ENCODE measurements at regions of chr1 and their contacts with region 1.

Region 1: DNA sequence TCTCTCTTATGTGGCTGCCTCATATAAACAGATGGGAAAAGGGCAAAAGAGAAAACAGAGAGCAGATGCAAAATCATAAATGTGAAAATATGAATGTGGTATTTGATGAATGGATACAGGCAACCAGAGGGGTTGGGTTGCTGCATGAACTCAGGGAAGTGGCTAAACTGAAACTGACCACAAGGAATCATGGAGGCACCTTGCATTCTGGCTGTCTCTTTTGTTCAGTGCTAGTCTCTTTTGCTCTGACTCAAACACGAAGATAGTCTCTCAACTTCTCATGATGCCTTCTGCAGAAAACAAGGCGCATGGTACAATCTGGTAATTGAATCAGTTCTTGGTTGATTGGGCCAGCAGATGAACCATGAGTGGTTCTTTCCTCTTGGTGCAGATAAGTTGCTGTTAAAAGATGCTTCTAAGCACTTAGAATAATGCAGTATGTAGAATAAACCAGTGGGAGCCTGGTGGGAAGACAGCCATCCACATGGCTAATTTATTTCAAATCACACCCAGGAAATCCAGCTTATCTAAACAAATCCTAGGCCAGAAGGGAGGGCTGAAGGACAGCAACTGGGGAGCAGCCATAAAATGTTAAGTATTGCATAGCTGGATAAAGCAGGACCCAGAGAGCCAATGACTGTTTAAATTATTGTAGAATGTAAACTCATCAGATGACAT is 64.2 kb downstream of the HLX start:
- DNase-seq: no peak
- H3K4me3 ChIP-seq: no peak overlapping the region
- H3K27ac ChIP-seq: no peak overlapping the region
- H3K4me1 ChIP-seq: no peaks in the 10 kb centered on the region
- CTCF ChIP-seq: no peak

Region 2: DNA sequence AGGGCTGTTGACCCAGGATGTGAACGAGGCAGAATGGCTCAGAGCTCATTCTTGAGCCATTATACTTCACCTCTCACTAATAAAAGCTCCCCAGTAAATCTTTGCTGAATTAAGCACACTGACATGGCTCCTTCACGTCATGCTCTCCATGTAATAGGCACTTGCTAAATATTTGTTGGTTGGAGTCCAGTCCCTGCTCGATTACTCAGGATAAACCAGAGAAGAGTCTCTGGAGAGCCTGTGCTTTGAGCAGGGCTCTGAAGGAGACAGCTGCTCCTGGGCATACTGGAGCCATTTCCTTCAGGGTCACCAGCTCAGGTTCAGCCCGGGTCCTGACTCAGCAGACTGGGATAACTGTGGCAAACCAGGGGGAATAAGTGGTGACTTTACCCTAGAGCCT is 17.3 kb before region 1 on chr1:
- CTCF ChIA-PET with region 1: no interaction called
- POLR2A ChIA-PET with region 1: interaction called, 11 read pairs
- intact Hi-C with region 1: no loop called
- DNase-seq: no peak
- H3K4me3 ChIP-seq: no peak overlapping the region
- H3K27ac ChIP-seq: no peak overlapping the region
- H3K4me1 ChIP-seq: no peaks in the 10 kb centered on the region
- CTCF ChIP-seq: no peak

Region 3: DNA sequence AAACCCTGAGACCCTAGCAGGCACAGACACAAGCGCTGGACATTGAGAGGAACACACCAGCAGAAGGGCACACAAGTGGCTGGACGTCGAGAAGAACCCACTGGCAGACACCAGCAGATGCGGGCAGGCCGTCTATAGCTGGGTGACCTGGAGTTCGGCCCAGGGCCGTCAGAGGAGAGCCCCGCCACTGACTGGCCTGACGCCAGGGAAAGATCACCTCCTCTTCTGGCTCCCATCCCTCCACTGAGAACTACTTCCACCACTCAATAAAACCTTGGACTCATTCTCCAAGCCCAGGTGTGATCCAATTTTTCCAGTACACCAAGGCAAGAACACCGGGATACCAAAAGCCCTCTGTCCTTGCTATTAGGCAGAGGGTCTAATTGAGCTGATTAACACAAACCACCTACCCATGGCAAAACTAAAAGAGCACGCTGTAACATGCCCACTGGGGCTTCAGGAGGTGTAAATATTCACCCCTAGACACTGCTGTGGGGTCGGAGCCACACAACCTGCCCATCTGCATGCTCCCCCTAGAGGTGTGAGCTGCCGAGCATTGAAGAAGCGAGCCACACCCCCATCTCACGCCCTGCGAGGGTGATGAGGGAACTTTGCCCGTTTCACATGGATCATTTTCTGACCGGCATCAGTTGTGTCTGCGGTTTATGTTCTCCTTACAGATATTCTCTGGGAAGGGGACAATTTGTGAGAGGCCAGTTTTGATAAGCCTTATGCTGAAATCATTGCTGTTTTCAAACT is 40.6 kb after region 1 on chr1:
- CTCF ChIA-PET with region 1: no interaction called
- POLR2A ChIA-PET with region 1: no interaction called
- intact Hi-C with region 1: no loop called
- DNase-seq: no peak
- H3K4me3 ChIP-seq: no peak overlapping the region
- H3K27ac ChIP-seq: no peak overlapping the region
- H3K4me1 ChIP-seq: no peaks in the 10 kb centered on the region
- CTCF ChIP-seq: peak; percentile 32; the same call in 1 of the 2 replicates

Region 4: DNA sequence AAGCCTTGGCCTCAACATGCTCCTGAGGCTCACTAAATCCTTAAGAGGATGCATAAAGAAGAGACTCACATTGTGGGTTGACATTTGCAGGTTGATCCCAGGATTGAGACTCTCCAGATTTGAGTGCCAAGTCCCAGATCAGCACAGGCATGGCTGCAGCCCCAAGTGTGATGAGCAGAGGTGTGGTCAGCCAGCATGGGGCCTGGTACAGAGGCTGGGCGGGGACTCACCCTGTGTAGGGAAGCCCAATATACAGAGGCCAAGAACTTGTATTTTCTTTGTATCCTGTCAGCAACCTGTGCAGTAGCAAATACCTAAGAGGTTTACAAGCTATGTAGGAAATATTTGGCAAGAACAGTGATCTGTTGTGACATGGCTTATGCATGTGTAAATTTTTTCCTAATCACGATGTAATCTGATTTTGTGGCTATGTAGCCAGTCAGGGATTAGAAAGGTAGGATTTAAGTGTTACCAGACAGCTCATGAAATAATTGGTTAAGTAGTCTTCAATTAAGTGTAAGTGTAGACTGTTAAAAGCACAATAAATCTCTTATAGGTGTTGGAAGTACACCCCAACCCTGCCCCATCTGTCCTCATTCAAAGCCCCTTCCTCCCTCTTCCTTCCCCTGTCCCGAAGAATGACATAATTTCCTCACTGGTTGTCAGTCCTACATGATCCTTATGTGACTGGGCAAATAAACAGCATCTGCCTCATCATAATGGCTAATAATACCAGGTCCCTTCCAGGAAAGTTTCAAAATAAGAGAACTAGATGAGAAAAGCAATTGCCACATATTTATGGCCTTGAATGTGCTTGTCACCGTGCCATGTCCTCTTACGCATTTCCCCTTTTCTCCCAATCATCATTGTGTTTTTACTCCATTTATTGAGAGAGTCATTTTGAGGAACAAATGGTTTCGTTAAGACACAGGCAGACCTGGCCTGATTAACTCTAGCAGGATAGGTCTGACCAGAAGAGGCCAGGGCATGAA is 56.7 kb after region 1 on chr1:
- CTCF ChIA-PET with region 1: no interaction called
- POLR2A ChIA-PET with region 1: no interaction called
- intact Hi-C with region 1: no loop called
- DNase-seq: no peak
- H3K4me3 ChIP-seq: no peak overlapping the region
- H3K27ac ChIP-seq: no peak overlapping the region
- H3K4me1 ChIP-seq: no peaks in the 10 kb centered on the region
- CTCF ChIP-seq: no peak